ENCODE measurements at regions of chr10 and their contacts with region 1.

Region 1: DNA sequence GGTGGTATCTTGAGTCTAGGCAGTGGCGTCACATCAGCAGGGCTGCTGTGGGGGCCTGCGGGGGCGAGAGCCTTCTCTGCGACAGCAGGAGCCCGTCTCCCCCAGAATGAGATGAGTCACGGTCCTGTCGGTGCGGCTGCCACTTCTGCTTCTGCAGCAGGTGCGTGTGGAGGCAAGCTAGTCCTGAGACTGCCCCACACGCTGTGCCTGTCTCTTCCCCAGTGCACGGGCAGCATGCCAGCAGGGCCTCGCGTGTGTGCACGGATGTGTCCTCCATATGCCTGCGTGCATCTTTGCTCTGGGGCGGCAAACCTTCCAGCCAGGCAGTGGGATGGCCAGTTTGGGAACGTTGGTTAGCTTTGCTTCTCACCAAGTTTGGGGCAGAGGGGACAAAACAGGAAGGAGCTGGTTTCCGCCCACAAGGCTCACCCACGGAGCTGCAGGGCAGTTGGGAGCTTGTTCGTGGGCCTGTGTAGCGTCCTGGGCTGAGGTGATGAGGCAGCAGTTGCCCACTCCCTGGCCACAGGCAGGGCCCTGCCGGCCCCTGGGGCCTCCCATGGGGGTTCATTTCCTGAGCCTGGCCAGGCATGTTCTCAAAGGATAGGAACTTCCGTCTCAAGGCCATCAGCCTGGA is 60.8 kb upstream of the PPIF start:
- DNase-seq: peak; percentile 70
- H3K4me3 Mint-ChIP-seq: peak overlapping the region; percentile 65
- H3K27ac Mint-ChIP-seq: peak overlapping the region; percentile 93
- H3K4me1 Mint-ChIP-seq: peaks cover 53% of the 10 kb centered on the region
- H3K27me3 Mint-ChIP-seq: no peaks in the 10 kb centered on the region

Region 2: GRCh38 chr10:79059859-79060379 is 226.5 kb before region 1 on chr10:
- intact Hi-C with region 1: no loop called
- DNase-seq: no peak
- H3K4me3 Mint-ChIP-seq: no peak overlapping the region
- H3K27ac Mint-ChIP-seq: no peak overlapping the region
- H3K4me1 Mint-ChIP-seq: peaks cover 19% of the 10 kb centered on the region
- H3K27me3 Mint-ChIP-seq: peaks cover 12% of the 10 kb centered on the region

Region 3: DNA sequence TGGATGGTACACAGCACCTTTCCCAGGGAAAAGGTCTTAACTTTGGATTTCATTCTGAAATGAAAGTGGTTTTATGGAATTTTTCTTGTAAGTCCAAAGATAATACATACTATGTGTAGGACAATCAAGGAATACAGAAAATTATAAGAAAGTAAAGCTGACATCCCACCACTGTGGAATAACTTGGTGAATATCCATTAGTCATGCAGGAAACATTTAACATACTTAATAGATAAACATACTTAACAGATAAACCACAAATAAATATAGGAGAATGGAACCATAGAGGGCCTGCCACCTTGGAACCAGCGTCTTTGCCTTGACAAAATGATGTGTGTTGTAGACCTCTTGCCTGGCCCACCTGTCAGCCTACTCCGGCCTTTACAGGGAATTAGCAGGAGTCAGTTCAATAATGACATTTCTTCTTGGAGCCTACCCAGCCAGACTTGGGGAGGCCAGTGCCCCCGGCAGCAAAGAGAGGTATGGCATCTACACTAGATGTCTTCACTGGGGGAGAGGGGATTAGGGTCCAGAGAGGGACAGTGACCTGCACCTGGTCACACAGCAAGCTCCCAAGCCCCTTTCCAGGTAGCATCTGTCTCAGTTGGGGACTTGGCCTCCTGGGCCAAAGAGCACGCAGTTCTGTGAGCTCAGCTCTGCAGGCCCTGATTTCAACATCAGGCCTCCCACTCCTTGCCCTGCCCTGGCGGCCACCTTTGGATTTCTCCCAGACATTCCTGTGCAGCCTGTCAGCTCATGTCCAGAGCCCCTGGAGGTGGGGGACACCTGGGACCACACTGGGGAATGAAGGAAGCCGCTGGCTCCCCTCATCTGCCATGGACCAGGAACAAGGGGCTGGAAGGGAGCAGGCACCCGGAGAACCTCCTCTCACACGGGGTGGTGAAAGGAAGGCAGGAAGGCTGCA is 51.8 kb before region 1 on chr10:
- intact Hi-C with region 1: no loop called
- DNase-seq: no peak
- H3K4me3 Mint-ChIP-seq: no peak overlapping the region
- H3K27ac Mint-ChIP-seq: no peak overlapping the region
- H3K4me1 Mint-ChIP-seq: peaks cover 6% of the 10 kb centered on the region
- H3K27me3 Mint-ChIP-seq: no peaks in the 10 kb centered on the region

Region 4: GRCh38 chr10:79248341-79249185 is 37.9 kb before region 1 on chr10:
- intact Hi-C with region 1: loop called (anchors 1 kb)
- DNase-seq: no peak
- H3K4me3 Mint-ChIP-seq: peak overlapping the region; percentile 78
- H3K27ac Mint-ChIP-seq: peak overlapping the region; percentile 92
- H3K4me1 Mint-ChIP-seq: peaks cover 67% of the 10 kb centered on the region
- H3K27me3 Mint-ChIP-seq: no peaks in the 10 kb centered on the region

Region 5: GRCh38 chr10:79316671-79317431 is 30.4 kb after region 1 on chr10:
- intact Hi-C with region 1: loop called (anchors 1 kb)
- DNase-seq: no peak
- H3K4me3 Mint-ChIP-seq: peak overlapping the region; percentile 52
- H3K27ac Mint-ChIP-seq: peak overlapping the region; percentile 81
- H3K4me1 Mint-ChIP-seq: peaks cover 62% of the 10 kb centered on the region
- H3K27me3 Mint-ChIP-seq: no peaks in the 10 kb centered on the region

Region 6: GRCh38 chr10:79331709-79332108 is 45.3 kb after region 1 on chr10:
- intact Hi-C with region 1: loop called (anchors 1 kb)
- DNase-seq: peak; percentile 71
- H3K4me3 Mint-ChIP-seq: peak overlapping the region; percentile 11
- H3K27ac Mint-ChIP-seq: peak overlapping the region; percentile 90
- H3K4me1 Mint-ChIP-seq: peaks cover 37% of the 10 kb centered on the region
- H3K27me3 Mint-ChIP-seq: no peaks in the 10 kb centered on the region